Right lobe of liver (tissue), 6 donors: ENCODE measurements at regions of chr7 and their contacts with region 1.

Region 1: DNA sequence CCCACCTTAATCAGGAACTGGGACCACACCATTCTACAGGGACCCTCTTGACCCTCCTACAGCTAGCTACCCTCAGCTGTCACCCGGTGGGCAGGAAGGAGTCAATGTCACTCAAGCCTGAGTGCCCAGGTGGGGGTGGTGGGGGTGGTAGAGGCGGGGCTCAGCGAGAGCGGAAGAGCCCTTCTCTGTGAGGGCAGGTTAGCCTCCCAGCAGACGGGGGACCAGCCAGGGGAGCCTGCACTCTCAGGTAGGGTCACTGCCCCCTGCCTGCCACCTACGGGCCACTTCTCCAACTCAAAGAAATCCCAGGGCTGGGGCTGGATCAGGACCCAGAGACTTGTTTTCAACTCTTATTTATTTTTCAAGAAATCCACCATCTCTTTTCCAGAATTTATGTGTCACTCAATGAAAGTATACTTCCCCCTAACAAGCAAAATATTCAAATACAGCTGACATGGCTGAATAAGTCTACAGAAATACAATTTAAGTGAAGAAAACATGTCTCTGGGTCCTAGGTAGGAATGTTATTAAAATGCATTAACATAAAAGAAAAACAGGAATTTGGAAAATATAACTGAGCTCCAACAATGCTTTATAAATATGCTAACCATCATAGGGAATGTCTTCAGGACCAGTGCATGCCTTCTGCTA is 63.4 kb upstream of the DDC start:
- DNase-seq: peak in 1 of 3 donors; percentile 38
- ATAC-seq: peak in 2 of 4 donors; percentile 8 to 31
- H3K4me3 ChIP-seq: no peak overlapping the region
- H3K27ac ChIP-seq: peak overlapping the region in 1 of 3 donors; percentile 2
- H3K4me1 ChIP-seq: peaks cover 0 to 15% (median 6%) of the 10 kb centered on the region in 4 donors
- H3K27me3 ChIP-seq: no peaks in the 10 kb centered on the region
- CTCF ChIP-seq: no peak
- POLR2A ChIP-seq: no peak

Region 2: DNA sequence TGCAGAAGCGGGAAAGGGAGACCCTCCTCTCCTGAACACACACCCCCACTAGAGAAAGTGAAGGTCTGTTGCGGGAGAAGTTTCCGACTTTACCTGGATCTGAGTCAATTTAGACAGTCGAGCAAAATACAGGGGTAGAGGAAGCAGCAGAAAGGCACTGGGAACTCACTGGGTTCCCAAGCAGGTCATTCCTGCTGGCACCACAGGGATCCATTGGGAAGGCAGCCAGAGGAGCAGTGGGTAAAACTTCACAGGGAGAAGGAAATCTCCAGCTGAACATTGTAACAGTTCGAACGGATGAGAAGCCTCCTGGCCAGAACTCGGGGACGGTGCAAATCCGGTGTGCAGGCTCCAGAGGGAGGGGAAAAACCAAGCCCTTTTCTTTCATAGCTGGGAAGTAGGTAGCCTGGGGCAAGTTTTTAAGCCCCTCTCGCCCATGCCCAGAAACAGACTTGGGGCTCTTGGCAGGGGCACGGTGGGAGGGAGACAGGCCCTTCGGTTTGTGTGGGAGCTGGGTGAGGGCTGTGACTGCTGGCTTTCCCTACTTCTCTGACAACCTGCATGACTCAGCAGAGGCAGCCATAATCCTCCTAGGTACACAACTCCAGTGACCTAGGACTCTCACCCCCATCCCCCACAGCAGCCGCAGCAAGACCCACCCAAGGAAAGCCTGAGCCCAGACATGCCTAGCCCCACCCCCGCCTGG is 115.2 kb before region 1 on chr7:
- intact Hi-C with region 1: no loop called
- DNase-seq: peak in 1 of 3 donors; percentile 27
- ATAC-seq: peak in 1 of 4 donors; percentile 27
- H3K4me3 ChIP-seq: no peak overlapping the region
- H3K27ac ChIP-seq: no peak overlapping the region
- H3K4me1 ChIP-seq: no peaks in the 10 kb centered on the region
- H3K27me3 ChIP-seq: no peaks in the 10 kb centered on the region
- CTCF ChIP-seq: no peak
- POLR2A ChIP-seq: no peak

Region 3: GRCh38 chr7:50679218-50680007 is 50.9 kb after region 1 on chr7:
- intact Hi-C with region 1: loop called in 1 of 2 experiments (anchors 10 kb)
- DNase-seq: no peak
- ATAC-seq: peak; percentile 48 to 66 (median 55)
- H3K4me3 ChIP-seq: no peak overlapping the region
- H3K27ac ChIP-seq: peak overlapping the region; percentile 31 to 79 (median 64)
- H3K4me1 ChIP-seq: peaks cover 0 to 82% (median 31%) of the 10 kb centered on the region in 4 donors
- H3K27me3 ChIP-seq: no peaks in the 10 kb centered on the region
- CTCF ChIP-seq: peak; percentile 46 to 61 (median 50)
- POLR2A ChIP-seq: no peak